ENCODE measurements at regions of chr7 and their contacts with region 1.

Region 1: DNA sequence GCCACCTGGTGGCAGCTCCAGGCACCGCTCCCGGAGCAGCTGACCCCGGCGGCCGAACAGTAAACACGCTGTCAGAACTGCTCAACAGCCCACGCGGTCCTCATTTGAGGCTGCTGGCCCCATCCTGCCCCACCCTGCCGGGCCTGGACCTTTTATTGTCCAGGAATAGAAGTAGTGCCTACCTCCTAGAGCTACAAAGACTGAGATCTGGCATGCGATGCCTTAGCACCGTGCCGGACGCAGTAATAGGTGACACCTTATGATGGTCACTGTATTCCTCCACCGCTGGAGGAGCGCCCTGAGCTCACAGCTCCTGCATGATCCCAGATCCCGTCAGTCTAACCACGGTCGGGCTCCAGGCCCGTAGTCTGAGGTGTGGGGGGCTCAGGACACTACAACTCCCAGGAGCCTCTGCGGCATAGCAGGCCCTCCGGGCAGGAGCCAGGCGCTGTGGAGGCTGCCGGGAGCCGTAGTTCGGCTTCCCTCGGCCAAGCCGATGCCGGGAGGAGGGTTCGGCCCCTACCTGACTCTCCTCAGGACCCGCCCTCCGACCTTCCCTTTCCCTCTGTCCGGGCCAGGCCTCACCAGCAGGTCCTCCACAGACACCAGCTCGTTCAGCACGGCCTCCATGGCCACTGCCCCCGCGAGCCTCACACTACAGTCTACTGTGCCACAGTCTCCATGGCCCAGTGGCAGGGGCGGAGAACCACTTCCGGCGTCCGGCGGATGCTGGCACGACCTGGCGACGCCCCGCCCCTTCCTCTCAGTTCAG is at the start of gene FIS1:
- DNase-seq: peak; percentile 97
- ATAC-seq: peak; percentile 95
- H3K4me3 Mint-ChIP-seq: peak within 1 kb of the TSS; percentile 85
- H3K27ac Mint-ChIP-seq: peak within 1 kb of the TSS; percentile 97
- H3K4me1 Mint-ChIP-seq: peaks cover 28% of the 10 kb centered on the region
- H3K27me3 Mint-ChIP-seq: no peaks in the 10 kb centered on the region
- CTCF ChIP-seq: peak; percentile 69
- total RNA-seq, gene FIS1: 86.5 to 96.8 TPM

Region 2: DNA sequence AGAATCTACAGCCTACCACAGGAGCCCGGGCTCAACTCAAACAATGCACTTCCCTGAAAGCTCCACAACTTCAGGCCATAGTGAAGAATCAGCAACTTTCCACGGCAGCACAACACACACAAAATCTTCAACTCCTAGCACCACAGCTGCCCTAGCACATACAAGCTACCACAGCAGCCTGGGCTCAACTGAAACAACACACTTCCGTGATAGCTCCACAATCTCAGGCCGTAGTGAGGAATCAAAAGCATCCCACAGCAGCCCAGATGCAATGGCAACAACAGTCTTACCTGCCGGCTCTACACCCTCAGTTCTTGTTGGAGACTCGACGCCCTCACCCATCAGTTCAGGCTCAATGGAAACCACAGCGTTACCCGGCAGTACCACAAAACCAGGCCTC is 252.9 kb before region 1 on chr7:
- CTCF ChIA-PET with region 1: no interaction called
- POLR2A ChIA-PET with region 1: no interaction called
- intact Hi-C with region 1: no loop called
- DNase-seq: no peak
- ATAC-seq: no peak
- H3K4me3 Mint-ChIP-seq: no peak overlapping the region
- H3K27ac Mint-ChIP-seq: no peak overlapping the region
- H3K4me1 Mint-ChIP-seq: no peaks in the 10 kb centered on the region
- H3K27me3 Mint-ChIP-seq: no peaks in the 10 kb centered on the region
- CTCF ChIP-seq: no peak

Region 3: GRCh38 chr7:101217388-101218235 is 26.9 kb before region 1 on chr7 and contains the starts of genes PLOD3 and ZNHIT1:
- CTCF ChIA-PET with region 1: interaction called, 49 read pairs
- POLR2A ChIA-PET with region 1: interaction called, 22 read pairs
- intact Hi-C with region 1: no loop called
- DNase-seq: peak; percentile 99
- ATAC-seq: peak; percentile 89
- H3K4me3 Mint-ChIP-seq: peak within 1 kb of the TSS; percentile 98
- H3K27ac Mint-ChIP-seq: peak within 1 kb of the TSS; percentile 88
- H3K4me1 Mint-ChIP-seq: peaks cover 28% of the 10 kb centered on the region
- H3K27me3 Mint-ChIP-seq: no peaks in the 10 kb centered on the region
- CTCF ChIP-seq: peak; percentile 35
- total RNA-seq, gene PLOD3: 20.4 to 24.4 TPM
- total RNA-seq, gene ZNHIT1: 36.8 to 37.9 TPM

Region 4: DNA sequence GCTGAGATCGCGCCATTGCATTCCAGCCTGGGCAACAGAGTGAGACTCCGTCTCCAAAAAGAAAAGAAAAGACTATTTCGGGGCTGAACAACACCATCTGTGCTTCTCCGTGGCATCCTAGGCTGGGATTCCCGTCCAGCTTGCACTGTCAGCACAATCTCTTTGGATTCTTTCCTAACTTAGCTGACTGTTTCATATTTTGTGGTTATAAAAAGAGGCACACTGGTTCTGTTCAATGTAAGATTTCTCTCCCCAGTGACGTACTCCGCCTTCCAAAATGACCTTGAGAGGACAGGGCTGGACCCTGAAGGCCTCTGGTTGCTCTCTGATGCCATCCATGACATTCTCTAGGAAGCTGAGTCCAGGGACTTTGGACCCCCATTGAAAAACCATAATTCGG is 17.8 kb before region 1 on chr7:
- CTCF ChIA-PET with region 1: interaction called, 17 read pairs
- POLR2A ChIA-PET with region 1: interaction called, 4 read pairs
- intact Hi-C with region 1: no loop called
- DNase-seq: no peak
- ATAC-seq: no peak
- H3K4me3 Mint-ChIP-seq: no peak overlapping the region
- H3K27ac Mint-ChIP-seq: no peak overlapping the region
- H3K4me1 Mint-ChIP-seq: peaks cover 3% of the 10 kb centered on the region
- H3K27me3 Mint-ChIP-seq: no peaks in the 10 kb centered on the region
- CTCF ChIP-seq: no peak